Left cardiac atrium (tissue), 4 donors: ENCODE measurements at regions of chr22 and their contacts with region 1.

Region 1: GRCh38 chr22:39612811-39613548 is 42.4 kb downstream of the CACNA1I start:
- DNase-seq: no peak
- ATAC-seq: no peak

Region 2: GRCh38 chr22:39559454-39560105 is 53.4 kb before region 1 on chr22:
- intact Hi-C with region 1: loop called in 1 of 2 experiments (anchors 10 kb)
- DNase-seq: no peak
- ATAC-seq: no peak